ENCODE measurements at regions of chr9 and their contacts with region 1.

Region 1: GRCh38 chr9:76667521-76667957 is 96.7 kb upstream of the PCA3 start:
- DNase-seq: no peak
- H3K4me3 Mint-ChIP-seq: no peak overlapping the region
- H3K27ac Mint-ChIP-seq: no peak overlapping the region
- H3K4me1 Mint-ChIP-seq: peaks cover 7% of the 10 kb centered on the region
- H3K27me3 Mint-ChIP-seq: no peaks in the 10 kb centered on the region
- CTCF ChIP-seq: no peak

Region 2: DNA sequence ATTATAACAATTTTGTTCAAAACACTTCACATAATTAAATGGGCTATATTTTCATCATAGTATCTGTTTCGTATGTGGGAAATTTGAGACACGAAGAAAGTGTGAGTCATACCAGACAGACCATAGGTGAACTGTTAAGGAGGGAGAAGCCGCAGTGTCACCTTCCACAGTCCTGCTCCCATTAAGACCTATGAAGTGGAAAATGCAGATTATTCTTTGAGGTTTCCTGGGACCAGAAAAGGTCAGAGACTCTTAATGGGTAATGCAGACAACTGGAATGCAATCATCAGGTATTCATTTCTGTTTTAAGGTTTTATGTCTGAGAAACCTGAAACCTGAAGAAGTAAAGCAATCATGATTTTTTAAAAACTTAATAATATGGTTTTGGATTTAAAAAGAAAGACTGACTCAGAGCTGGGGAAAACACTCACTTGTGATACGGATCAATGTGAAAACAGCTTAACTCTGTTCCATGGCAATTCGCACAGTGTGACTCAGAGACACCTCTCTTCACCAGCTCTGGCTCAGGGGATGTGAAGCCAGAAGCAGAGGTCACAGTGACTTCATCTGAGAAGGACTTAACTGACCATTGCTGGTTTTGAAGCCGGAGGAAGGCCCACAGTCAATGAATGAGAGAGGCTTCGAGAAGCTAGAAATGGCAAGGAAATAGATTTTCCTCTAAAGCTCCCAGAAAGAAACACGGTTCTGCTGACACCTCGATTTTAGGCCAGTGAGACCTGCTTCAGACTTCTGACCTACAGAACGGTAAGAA is 225.8 kb before region 1 on chr9:
- CTCF ChIA-PET with region 1: interaction called, 226 read pairs
- POLR2A ChIA-PET with region 1: no interaction called
- intact Hi-C with region 1: no loop called
- DNase-seq: peak; percentile 24
- H3K4me3 Mint-ChIP-seq: no peak overlapping the region
- H3K27ac Mint-ChIP-seq: no peak overlapping the region
- H3K4me1 Mint-ChIP-seq: no peaks in the 10 kb centered on the region
- H3K27me3 Mint-ChIP-seq: no peaks in the 10 kb centered on the region
- CTCF ChIP-seq: no peak

Region 3: GRCh38 chr9:76677481-76678055 is 10.0 kb after region 1 on chr9:
- CTCF ChIA-PET with region 1: interaction called, 12 read pairs
- POLR2A ChIA-PET with region 1: no interaction called
- intact Hi-C with region 1: no loop called
- DNase-seq: no peak
- H3K4me3 Mint-ChIP-seq: no peak overlapping the region
- H3K27ac Mint-ChIP-seq: no peak overlapping the region
- H3K4me1 Mint-ChIP-seq: no peaks in the 10 kb centered on the region
- H3K27me3 Mint-ChIP-seq: no peaks in the 10 kb centered on the region
- CTCF ChIP-seq: no peak

Region 4: GRCh38 chr9:76687861-76688391 is 20.4 kb after region 1 on chr9:
- CTCF ChIA-PET with region 1: interaction called, 13 read pairs
- POLR2A ChIA-PET with region 1: no interaction called
- intact Hi-C with region 1: no loop called
- DNase-seq: peak; percentile 95
- H3K4me3 Mint-ChIP-seq: peak overlapping the region; percentile 35
- H3K27ac Mint-ChIP-seq: peak overlapping the region; percentile 96
- H3K4me1 Mint-ChIP-seq: peaks cover 26% of the 10 kb centered on the region
- H3K27me3 Mint-ChIP-seq: no peaks in the 10 kb centered on the region
- CTCF ChIP-seq: no peak

Region 5: GRCh38 chr9:76713381-76713780 is 45.8 kb after region 1 on chr9:
- CTCF ChIA-PET with region 1: interaction called, 285 read pairs
- POLR2A ChIA-PET with region 1: no interaction called
- intact Hi-C with region 1: no loop called
- DNase-seq: no peak
- H3K4me3 Mint-ChIP-seq: no peak overlapping the region
- H3K27ac Mint-ChIP-seq: no peak overlapping the region
- H3K4me1 Mint-ChIP-seq: peaks cover 2% of the 10 kb centered on the region
- H3K27me3 Mint-ChIP-seq: peaks cover 11% of the 10 kb centered on the region
- CTCF ChIP-seq: no peak

Region 6: GRCh38 chr9:76987594-76988200 is 320.2 kb after region 1 on chr9:
- CTCF ChIA-PET with region 1: no interaction called
- POLR2A ChIA-PET with region 1: no interaction called
- intact Hi-C with region 1: no loop called
- DNase-seq: peak; percentile 68
- H3K4me3 Mint-ChIP-seq: no peak overlapping the region
- H3K27ac Mint-ChIP-seq: no peak overlapping the region
- H3K4me1 Mint-ChIP-seq: no peaks in the 10 kb centered on the region
- H3K27me3 Mint-ChIP-seq: peaks cover 33% of the 10 kb centered on the region
- CTCF ChIP-seq: peak; percentile 58